ENCODE measurements at regions of chr14 and their contacts with region 1.

Region 1: DNA sequence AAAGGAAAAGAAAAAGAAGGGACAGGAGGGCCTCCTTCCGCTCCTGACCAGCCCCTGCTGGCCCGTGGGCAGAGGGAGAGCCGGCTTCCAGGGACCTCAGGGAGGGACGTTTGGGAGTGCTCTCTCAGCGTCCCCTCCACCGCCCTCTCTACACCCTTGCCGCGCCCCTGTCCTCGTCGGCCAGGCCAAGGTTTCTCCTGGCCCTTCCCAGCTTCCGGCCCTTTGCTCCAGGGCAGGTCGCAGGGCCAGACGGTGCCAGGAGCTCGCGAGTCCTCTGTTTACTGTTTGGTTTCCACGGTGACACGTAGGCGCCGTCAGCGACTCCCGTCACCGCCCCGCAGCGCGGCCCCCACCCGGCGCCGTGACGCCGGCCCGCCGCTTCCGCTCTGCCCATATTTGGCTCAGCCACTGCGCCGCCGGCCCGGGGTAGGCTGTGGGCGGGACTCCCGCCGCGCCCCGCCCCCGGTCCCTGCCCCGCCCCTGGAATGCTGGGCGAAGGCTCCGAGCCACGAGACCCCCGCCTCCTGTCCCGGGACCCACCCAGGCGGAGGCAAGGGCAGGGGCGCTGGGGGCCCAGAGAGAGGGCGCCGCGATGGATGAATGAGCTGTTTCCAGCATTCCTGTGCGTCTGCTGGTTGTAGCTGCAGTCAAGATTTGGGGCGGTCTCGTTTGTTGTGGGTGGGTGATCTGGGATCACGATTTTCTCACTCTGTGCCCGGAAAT is 15.5 kb downstream of the FOS start:
- DNase-seq: peak; percentile 88 to 98
- H3K4me3 ChIP-seq: peak overlapping the region; percentile 73 to 78
- H3K27ac ChIP-seq: peak overlapping the region; percentile 93 to 96
- H3K4me1 ChIP-seq: peaks cover 10 to 13% of the 10 kb centered on the region in 2 donors
- H3K27me3 ChIP-seq: no peaks in the 10 kb centered on the region
- CTCF ChIP-seq: peak in 1 of 3 experiments; percentile 2

Region 2: DNA sequence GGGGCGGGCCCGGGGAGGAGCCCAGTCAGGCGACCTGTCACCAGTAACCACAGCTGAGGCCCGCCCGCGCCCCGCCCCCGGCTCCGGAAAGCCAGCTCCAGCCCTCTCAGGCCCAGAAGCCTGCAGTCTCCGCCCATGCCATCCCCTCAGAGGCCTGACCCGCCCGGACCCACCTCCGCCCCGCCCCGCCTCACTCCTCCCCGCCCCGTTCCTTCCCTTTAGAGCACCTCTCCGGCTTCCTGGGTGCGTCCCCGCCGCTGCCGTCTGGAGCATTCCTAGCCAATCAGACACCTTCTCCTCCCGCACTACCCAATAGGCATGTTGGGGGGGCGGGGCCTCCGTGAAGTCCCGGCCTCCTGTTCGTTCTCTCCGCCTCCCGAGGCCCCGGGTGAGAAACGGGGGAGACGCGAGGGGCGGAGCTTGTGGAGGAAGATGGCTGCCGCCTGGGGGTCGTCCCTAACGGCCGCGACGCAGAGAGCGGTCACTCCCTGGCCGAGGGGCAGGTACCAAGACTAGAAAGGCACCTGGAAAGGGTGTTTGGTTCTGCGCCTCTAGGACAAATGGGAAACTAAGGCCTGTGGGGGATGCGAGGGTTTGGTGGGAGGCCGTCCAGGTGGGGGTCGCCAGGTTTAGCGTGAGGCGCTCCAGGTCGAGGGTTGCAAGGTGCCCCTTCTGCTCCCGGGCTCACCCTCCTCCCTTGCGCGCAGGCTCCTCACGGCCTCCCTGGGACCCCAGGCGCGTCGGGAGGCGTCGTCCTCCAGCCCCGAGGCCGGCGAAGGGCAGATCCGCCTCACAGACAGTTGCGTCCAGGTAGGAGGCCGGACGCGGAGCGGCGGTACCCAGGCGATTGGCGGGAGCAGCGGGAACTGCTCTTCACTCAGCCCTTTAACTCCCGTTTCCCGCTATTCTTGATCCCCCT is 800.5 kb before region 1 on chr14 and contains the start of gene ISCA2:
- intact Hi-C with region 1: loop called (anchors 10 kb)
- DNase-seq: peak; percentile 99 to 100
- H3K4me3 ChIP-seq: peak within 1 kb of the TSS; percentile 91 to 93
- H3K27ac ChIP-seq: peak within 1 kb of the TSS; percentile 94 to 95
- H3K4me1 ChIP-seq: peaks cover 0 to 7% of the 10 kb centered on the region in 2 donors
- H3K27me3 ChIP-seq: no peaks in the 10 kb centered on the region
- CTCF ChIP-seq: no peak
- total RNA-seq, gene ISCA2: 10.0 TPM

Region 3: GRCh38 chr14:74979442-74980361 is 314.4 kb before region 1 on chr14:
- intact Hi-C with region 1: loop called (anchors 10 kb)
- DNase-seq: peak in 1 of 2 donors; percentile 78
- H3K4me3 ChIP-seq: no peak overlapping the region
- H3K27ac ChIP-seq: peak overlapping the region; percentile 95
- H3K4me1 ChIP-seq: peaks cover 25 to 43% of the 10 kb centered on the region in 2 donors
- H3K27me3 ChIP-seq: no peaks in the 10 kb centered on the region
- CTCF ChIP-seq: peak in 2 of 3 experiments; percentile 22 to 34

Region 4: GRCh38 chr14:75069045-75069810 is 224.9 kb before region 1 on chr14 and contains the start of gene ZC2HC1C:
- intact Hi-C with region 1: loop called (anchors 5 kb)
- DNase-seq: peak; percentile 81 to 97
- H3K4me3 ChIP-seq: peak within 1 kb of the TSS; percentile 59 to 84
- H3K27ac ChIP-seq: peak within 1 kb of the TSS; percentile 83 to 91
- H3K4me1 ChIP-seq: peaks cover 2 to 13% of the 10 kb centered on the region in 2 donors
- H3K27me3 ChIP-seq: no peaks in the 10 kb centered on the region
- CTCF ChIP-seq: no peak
- total RNA-seq, gene ZC2HC1C: not detected

Region 5: DNA sequence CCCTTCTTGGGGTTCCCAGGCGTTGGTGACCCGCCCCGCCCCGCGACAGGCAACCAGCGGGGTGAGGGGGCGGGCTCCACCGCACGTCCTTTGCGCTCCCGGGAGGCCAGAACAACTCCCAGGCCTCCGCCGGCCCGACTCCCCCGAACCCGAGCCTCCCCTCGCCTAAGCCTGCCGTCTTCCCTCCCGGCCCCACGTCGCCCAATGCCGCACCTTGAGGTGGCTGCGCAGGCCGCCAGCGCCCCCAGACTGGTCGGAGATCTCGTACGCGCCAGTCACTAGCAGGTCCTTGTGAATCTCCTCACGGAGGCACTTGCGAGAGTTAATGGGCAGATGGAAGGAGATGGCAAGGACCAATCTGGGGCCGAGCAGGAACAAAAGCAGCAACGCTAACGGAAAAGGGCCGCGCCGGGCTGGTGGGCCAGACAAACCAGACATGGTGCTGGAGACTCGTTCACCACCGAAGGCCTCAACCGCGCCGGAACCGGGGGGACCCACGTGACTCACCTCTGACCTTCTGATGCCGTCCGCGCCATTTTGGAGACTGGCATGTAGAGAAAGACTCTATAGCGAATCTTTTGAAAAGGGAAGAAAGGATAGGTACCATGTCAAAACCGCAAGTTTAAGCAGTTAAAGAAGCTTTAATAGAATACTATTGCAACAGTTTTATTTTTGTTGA is 117.8 kb before region 1 on chr14 and contains the start of gene TMED10:
- intact Hi-C with region 1: loop called (anchors 1 kb)
- DNase-seq: peak; percentile 55 to 92
- H3K4me3 ChIP-seq: peak within 1 kb of the TSS; percentile 92 to 97
- H3K27ac ChIP-seq: peak within 1 kb of the TSS; percentile 99 to 100
- H3K4me1 ChIP-seq: peaks cover 0 to 15% of the 10 kb centered on the region in 2 donors
- H3K27me3 ChIP-seq: no peaks in the 10 kb centered on the region
- CTCF ChIP-seq: peak in 1 of 3 experiments; percentile 10
- total RNA-seq, gene TMED10: 190 TPM

Region 6: GRCh38 chr14:75258615-75259466 is 35.2 kb before region 1 on chr14:
- intact Hi-C with region 1: loop called (anchors 1 kb)
- DNase-seq: peak; percentile 97 to 100
- H3K4me3 ChIP-seq: peak overlapping the region; percentile 46 to 62
- H3K27ac ChIP-seq: peak overlapping the region; percentile 93 to 97
- H3K4me1 ChIP-seq: peaks cover 0 to 32% of the 10 kb centered on the region in 2 donors
- H3K27me3 ChIP-seq: no peaks in the 10 kb centered on the region
- CTCF ChIP-seq: no peak

Region 7: DNA sequence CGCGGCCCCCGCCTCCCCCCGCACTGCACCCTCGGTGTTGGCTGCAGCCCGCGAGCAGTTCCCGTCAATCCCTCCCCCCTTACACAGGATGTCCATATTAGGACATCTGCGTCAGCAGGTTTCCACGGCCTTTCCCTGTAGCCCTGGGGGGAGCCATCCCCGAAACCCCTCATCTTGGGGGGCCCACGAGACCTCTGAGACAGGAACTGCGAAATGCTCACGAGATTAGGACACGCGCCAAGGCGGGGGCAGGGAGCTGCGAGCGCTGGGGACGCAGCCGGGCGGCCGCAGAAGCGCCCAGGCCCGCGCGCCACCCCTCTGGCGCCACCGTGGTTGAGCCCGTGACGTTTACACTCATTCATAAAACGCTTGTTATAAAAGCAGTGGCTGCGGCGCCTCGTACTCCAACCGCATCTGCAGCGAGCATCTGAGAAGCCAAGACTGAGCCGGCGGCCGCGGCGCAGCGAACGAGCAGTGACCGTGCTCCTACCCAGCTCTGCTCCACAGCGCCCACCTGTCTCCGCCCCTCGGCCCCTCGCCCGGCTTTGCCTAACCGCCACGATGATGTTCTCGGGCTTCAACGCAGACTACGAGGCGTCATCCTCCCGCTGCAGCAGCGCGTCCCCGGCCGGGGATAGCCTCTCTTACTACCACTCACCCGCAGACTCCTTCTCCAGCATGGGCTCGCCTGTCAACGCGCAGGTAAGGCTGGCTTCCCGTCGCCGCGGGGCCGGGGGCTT is 15.5 kb before region 1 on chr14 and contains the start of gene FOS:
- intact Hi-C with region 1: loop called (anchors 1 kb)
- DNase-seq: peak; percentile 83 to 97
- H3K4me3 ChIP-seq: peak within 1 kb of the TSS; percentile 88 to 89
- H3K27ac ChIP-seq: peak within 1 kb of the TSS; percentile 95 to 100
- H3K4me1 ChIP-seq: peaks cover 13 to 21% of the 10 kb centered on the region in 2 donors
- H3K27me3 ChIP-seq: no peaks in the 10 kb centered on the region
- CTCF ChIP-seq: peak in 1 of 3 experiments; percentile 38
- total RNA-seq, gene FOS: 4,268 TPM

Region 8: DNA sequence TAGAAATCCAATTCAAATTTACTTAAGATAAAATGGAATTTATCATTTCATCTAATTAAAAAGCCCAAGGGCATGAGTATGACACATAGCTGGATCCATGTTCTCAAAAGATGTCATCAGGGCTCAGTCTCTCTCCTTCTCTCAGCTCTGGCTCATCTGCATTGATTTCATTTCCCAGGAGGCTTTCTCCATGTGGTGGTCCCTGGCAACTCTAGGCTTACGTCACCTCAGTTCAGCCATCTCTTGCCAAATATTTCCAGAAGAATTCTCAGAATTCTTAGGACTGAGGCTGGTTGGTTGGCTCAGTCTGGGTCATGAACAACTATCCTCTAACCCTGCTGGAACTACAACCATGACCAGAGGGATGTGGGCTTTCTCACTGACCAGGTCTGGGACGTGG is 49.8 kb after region 1 on chr14:
- intact Hi-C with region 1: no loop called
- DNase-seq: no peak
- H3K4me3 ChIP-seq: no peak overlapping the region
- H3K27ac ChIP-seq: no peak overlapping the region
- H3K4me1 ChIP-seq: peaks cover 0 to 4% of the 10 kb centered on the region in 2 donors
- H3K27me3 ChIP-seq: no peaks in the 10 kb centered on the region
- CTCF ChIP-seq: no peak

Measured in ascending aorta (tissue), 2 donors.